Esophagus muscularis mucosa (tissue), 4 donors: ENCODE measurements at regions of chr6 and their contacts with region 1.

Region 1: GRCh38 chr6:56637640-56638039 is 5.0 kb downstream of the DST start:
- DNase-seq: no peak
- H3K4me3 ChIP-seq: no peak overlapping the region
- H3K27ac ChIP-seq: peak overlapping the region in 2 of 4 donors; percentile 40 to 60
- H3K4me1 ChIP-seq: peaks cover 0 to 20% (median 7%) of the 10 kb centered on the region in 4 donors
- H3K27me3 ChIP-seq: no peaks in the 10 kb centered on the region
- CTCF ChIP-seq: peak; percentile 74 to 76 (median 74)
- EP300 ChIP-seq: no peak
- POLR2A ChIP-seq: no peak

Region 2: GRCh38 chr6:56570413-56571359 is 67.0 kb before region 1 on chr6:
- intact Hi-C with region 1: no loop called
- DNase-seq: no peak
- H3K4me3 ChIP-seq: no peak overlapping the region
- H3K27ac ChIP-seq: no peak overlapping the region
- H3K4me1 ChIP-seq: peaks cover 5 to 47% (median 28%) of the 10 kb centered on the region in 4 donors
- H3K27me3 ChIP-seq: no peaks in the 10 kb centered on the region
- CTCF ChIP-seq: peak; percentile 51 to 74 (median 56)
- EP300 ChIP-seq: no peak
- POLR2A ChIP-seq: no peak

Region 3: DNA sequence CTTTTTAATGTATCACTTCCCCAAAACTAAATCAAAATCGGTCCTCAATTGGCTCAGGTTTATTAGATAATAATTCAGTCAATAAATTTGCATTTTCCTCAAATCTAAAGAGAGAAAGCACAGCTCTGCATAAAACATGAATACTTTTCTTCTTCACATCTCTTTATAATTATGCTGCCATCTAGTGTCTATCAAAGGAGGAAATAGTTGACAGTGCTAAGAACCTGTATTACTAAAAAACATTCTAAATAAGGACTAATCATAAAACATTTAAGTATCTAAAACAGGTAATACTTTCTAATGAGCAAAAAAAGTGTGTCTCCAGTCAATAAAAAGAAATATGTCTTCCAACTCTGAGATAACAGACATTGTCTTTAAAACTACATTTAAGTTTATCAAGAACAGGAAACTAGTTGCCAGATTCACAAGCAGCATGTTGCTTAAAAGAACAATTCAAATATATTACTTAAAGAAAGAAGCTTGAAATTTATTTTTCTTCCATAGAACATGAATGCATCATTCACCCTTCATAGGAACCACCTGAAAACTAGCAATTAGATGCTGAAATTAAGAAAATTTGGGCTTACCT is 61.5 kb after region 1 on chr6:
- intact Hi-C with region 1: loop called (anchors 2 kb)
- DNase-seq: no peak
- H3K4me3 ChIP-seq: no peak overlapping the region
- H3K27ac ChIP-seq: no peak overlapping the region
- H3K4me1 ChIP-seq: peaks cover 4 to 46% (median 32%) of the 10 kb centered on the region in 4 donors
- H3K27me3 ChIP-seq: no peaks in the 10 kb centered on the region
- CTCF ChIP-seq: peak; percentile 51 to 62 (median 60)
- EP300 ChIP-seq: no peak
- POLR2A ChIP-seq: no peak

Region 4: DNA sequence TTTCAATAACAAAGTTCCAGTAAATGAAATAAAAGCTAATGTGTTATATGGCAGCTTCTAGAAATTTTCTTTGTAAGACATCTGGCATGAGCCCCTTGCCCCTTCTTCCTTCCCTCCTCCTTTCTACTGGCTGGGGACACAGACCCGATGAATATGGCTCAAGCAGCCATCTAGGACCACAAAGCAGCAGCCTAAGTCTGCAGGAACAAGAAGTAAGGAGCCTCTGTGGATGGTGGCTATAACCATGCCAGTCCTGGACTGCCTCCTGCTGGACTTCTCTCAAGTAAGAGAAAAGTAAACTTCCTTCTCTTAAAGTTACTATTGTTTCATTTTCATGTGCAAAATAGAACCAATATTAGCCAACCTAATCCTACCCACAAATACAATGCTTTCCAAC is 119.9 kb after region 1 on chr6:
- intact Hi-C with region 1: loop called (anchors 5 kb)
- DNase-seq: no peak
- H3K4me3 ChIP-seq: no peak overlapping the region
- H3K27ac ChIP-seq: peak overlapping the region in 2 of 4 donors; percentile 10 to 16
- H3K4me1 ChIP-seq: peaks cover 38 to 65% (median 51%) of the 10 kb centered on the region in 4 donors
- H3K27me3 ChIP-seq: no peaks in the 10 kb centered on the region
- CTCF ChIP-seq: peak; percentile 31 to 60 (median 38)
- EP300 ChIP-seq: no peak
- POLR2A ChIP-seq: no peak

Region 5: DNA sequence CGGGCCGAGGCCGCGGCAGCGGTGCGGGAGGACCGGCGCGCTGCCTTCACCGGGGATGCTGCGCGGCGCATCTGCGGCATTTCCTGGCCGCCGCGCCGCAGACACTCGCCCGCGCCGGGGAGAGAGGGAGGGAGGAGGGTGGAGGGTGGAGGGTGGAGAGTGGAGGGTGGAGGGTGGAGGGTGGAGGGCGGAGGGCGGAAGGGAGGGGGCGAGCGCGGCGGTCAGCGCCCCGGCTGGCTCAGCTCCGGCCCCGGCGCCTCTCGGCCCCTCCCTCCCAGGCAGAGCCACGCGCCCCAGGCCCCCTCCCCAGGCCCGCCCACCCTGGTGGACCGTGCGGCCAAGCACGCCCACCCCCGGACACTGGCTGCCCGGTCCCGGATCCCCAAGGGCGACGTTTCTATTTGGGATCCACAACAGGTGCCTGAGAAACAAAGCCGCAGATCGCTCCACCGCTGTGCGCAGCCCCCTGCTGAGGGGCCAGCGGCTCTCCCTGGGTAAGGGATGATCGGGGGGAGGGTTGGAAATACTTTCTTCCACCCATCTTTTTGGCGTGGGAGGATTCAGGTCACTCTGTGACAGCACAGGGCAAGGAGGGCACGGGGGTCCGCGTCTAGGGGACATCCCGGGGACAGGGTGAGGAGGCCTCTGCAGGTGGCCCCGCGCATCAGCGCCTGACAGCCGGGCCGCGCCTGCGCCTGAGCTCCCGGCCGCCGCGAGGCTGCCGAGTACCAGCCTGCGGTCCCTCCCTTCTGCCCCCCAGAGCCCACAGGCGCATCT is 206.1 kb after region 1 on chr6:
- intact Hi-C with region 1: loop called (anchors 2 kb)
- DNase-seq: no peak
- H3K4me3 ChIP-seq: peak overlapping the region; percentile 84 to 94 (median 90)
- H3K27ac ChIP-seq: peak overlapping the region; percentile 92 to 96 (median 94)
- H3K4me1 ChIP-seq: peaks cover 4 to 44% (median 35%) of the 10 kb centered on the region in 4 donors
- H3K27me3 ChIP-seq: no peaks in the 10 kb centered on the region
- CTCF ChIP-seq: peak in 2 of 3 experiments; percentile 73 to 74
- EP300 ChIP-seq: no peak
- POLR2A ChIP-seq: peak; percentile 64

Region 6: DNA sequence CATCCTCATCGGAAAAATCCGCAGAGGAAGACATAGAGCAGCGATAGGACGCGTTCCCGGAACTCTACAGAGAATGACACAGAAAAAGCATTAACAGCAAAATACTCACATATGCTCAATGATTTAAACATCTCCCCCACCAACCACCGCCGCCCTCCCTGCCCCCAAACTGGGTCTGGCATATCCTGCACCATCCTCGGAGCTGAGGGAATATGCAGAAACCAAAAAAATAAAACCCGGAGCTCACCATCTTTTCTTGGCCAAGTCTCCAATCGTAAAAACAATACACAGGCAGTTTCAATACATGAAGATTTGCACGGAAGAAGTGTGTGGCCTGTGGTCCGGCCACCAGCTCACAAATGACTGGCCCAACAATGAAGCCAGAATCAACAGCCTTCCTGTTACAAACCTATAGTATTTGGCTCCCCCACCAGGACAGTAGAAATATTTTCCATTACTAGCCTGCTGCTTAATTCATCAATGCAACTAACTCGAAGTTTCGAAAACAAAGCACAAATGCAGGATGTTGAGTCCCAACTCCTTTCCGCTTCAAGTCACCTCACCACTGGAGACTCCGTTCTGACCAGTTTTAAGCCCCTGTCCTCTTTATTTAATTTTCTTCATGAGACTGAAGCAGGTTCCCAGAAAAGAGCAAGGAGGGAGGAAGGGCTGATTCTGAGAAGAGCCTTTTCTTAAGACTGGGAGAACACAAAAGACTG is 214.1 kb after region 1 on chr6:
- intact Hi-C with region 1: loop called (anchors 2 kb)
- DNase-seq: no peak
- H3K4me3 ChIP-seq: peak overlapping the region; percentile 49 to 65 (median 57)
- H3K27ac ChIP-seq: peak overlapping the region; percentile 57 to 62 (median 58)
- H3K4me1 ChIP-seq: peaks cover 15 to 34% (median 27%) of the 10 kb centered on the region in 4 donors
- H3K27me3 ChIP-seq: no peaks in the 10 kb centered on the region
- CTCF ChIP-seq: peak; percentile 59 to 74 (median 70)
- EP300 ChIP-seq: no peak
- POLR2A ChIP-seq: no peak